PC-9 (cell line): ENCODE measurements at regions of chr10 and their contacts with region 1.

Region 1: DNA sequence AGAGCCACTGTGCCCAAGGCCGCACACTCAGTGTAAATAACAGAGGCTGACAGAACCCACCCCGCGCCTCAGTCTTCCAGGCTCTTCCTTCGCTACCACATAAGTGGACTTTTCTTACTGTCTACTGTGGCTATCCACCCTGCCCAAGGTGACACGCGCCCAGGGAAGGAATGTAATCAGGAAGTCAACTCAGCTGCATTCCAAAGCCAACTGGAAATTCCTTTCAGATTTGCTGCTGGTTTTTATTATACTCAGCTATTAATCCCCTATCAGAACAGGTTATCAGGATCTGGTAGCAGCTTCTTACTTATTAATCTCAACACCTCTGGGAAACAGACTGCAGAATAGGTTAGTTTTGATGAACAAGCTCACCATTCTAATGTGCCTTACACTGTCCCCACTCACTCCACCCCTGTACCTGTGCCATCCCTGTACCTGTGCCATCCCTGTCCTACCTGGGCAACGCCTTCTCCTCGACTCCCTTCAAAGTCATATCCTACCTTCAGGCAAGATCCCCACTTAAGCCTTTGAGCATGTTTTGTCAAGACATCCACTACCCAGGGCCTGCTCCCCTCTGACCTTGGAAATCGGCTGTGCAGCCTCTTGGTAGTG is 90.7 kb downstream of the NHLRC2 start:
- DNase-seq: peak; percentile 56 to 80
- H3K4me3 ChIP-seq: no peak overlapping the region
- H3K27ac ChIP-seq: peak overlapping the region; percentile 58; the same call in 1 of the 2 replicates
- H3K4me1 ChIP-seq: peaks cover 37% of the 10 kb centered on the region
- H3K27me3 ChIP-seq: no peaks in the 10 kb centered on the region
- CTCF ChIP-seq: no peak

Region 2: DNA sequence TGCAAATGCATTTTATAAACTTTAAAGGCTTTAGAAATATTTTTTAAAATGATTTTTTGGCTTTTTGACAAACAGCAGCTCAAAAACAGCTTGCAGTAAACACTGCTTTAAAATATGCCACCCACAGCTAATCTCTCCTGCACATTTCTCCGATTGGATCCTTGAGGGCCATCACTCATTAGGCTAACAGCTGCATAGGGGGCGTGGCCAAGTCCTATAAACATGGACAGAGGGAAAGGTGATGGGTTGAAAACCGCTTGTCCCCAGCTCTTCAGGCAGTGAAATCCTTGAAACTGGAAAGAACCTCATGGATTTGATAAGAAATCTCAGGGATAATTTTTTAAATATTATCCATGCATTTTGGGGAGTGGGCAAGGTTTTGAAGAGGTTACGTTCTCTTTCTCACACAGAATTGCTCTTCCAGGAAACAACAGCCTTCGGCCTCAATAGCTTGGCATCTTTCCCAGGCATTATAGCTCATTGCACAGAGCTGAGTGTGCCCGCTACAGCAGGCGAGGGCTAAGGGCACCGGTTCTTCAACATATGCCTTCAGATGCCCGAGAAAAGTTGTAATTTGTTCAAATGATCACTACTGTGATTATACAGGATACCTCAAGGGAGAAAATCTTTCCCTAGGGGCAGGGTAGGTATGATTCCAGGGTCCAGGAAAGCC is 192.0 kb before region 1 on chr10:
- CTCF ChIA-PET with region 1: no interaction called
- POLR2A ChIA-PET with region 1: no interaction called
- intact Hi-C with region 1: loop called (anchors 5 kb)
- DNase-seq: peak in 1 of 2 experiments; percentile 19
- H3K4me3 ChIP-seq: no peak overlapping the region
- H3K27ac ChIP-seq: no peak overlapping the region
- H3K4me1 ChIP-seq: no peaks in the 10 kb centered on the region
- H3K27me3 ChIP-seq: no peaks in the 10 kb centered on the region
- CTCF ChIP-seq: no peak

Region 3: GRCh38 chr10:113762099-113762498 is 183.1 kb before region 1 on chr10:
- CTCF ChIA-PET with region 1: no interaction called
- POLR2A ChIA-PET with region 1: interaction called, 24 read pairs
- intact Hi-C with region 1: no loop called
- DNase-seq: no peak
- H3K4me3 ChIP-seq: no peak overlapping the region
- H3K27ac ChIP-seq: no peak overlapping the region
- H3K4me1 ChIP-seq: no peaks in the 10 kb centered on the region
- H3K27me3 ChIP-seq: no peaks in the 10 kb centered on the region
- CTCF ChIP-seq: no peak

Region 4: GRCh38 chr10:113854011-113854760 is 91.0 kb before region 1 on chr10 and contains the starts of genes DCLRE1A and NHLRC2:
- CTCF ChIA-PET with region 1: no interaction called
- POLR2A ChIA-PET with region 1: interaction called, 11 read pairs
- intact Hi-C with region 1: no loop called
- DNase-seq: peak; percentile 44 to 52
- H3K4me3 ChIP-seq: peak within 1 kb of the TSS; percentile 84
- H3K27ac ChIP-seq: peak within 1 kb of the TSS; percentile 65
- H3K4me1 ChIP-seq: peaks cover 28% of the 10 kb centered on the region
- H3K27me3 ChIP-seq: no peaks in the 10 kb centered on the region
- CTCF ChIP-seq: no peak
- total RNA-seq, gene DCLRE1A: 6.1 and 7.7 TPM in 2 replicates
- total RNA-seq, gene NHLRC2: 22.5 and 22.8 TPM in 2 replicates